Caco-2 (cell line): ENCODE measurements at regions of chr1 and their contacts with region 1.

Region 1: DNA sequence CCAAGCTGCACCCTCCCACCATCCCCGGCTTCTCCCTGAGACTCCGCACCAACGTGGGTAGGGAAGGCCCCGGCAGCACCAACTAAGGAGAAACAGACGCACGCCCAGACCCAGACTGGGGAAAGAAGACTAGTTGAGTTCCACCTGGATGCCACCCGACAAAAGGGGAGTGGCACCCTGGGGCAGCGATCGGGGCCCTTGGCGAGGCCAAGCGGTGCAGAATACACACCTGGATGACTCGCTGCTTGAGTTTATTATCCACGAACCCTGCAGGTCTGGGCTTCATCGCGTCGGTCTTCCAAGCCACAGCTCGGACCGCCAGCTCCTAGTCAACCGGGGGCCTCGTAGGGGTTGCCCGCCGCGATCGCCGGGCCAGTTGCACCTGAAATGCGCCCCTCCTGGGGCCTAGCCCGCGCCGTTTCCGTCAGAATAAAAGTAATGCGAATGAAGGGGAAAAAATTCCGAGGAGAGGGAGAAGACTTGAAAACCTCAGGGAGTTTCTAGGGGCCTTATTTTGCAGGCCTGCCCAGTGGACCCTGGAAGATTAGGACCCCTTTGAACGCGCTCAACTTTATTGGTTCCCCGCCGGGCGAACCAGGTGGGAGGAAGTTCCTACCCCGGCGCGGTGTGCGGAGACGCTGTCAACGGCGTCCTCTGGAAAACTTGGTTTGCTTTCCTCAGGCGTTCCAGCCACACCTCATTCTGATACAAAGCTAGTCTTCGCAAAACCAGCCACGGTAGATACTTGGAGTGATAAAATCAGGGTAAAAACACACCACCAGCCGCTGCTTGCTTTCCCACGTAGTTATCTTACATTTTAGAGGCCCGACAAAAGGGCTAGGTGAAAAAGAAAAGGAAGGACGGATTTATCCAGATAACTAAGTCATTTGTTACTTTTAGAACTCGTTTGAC is at the start of gene NVL:
- DNase-seq: peak; percentile 88 to 92
- H3K4me3 ChIP-seq: peak within 1 kb of the TSS; percentile 76
- H3K4me3 Mint-ChIP-seq: peak within 1 kb of the TSS; percentile 92
- H3K27ac Mint-ChIP-seq: peak within 1 kb of the TSS; percentile 99
- H3K4me1 ChIP-seq: no peaks in the 10 kb centered on the region; the same call in 1 of the 2 replicates
- H3K4me1 Mint-ChIP-seq: peaks cover 20% of the 10 kb centered on the region
- H3K27me3 ChIP-seq: no peaks in the 10 kb centered on the region
- H3K27me3 Mint-ChIP-seq: no peaks in the 10 kb centered on the region
- CTCF ChIP-seq: no peak
- total RNA-seq, gene NVL: 45.0 and 52.3 TPM in 2 replicates

Region 2: GRCh38 chr1:224116131-224116530 is 214.0 kb before region 1 on chr1:
- CTCF ChIA-PET with region 1: no interaction called
- POLR2A ChIA-PET with region 1: no interaction called
- intact Hi-C with region 1: loop called (anchors 1 kb)
- DNase-seq: peak in 1 of 2 experiments; percentile 9
- H3K4me3 ChIP-seq: no peak overlapping the region; the same call in 1 of the 2 replicates
- H3K4me3 Mint-ChIP-seq: no peak overlapping the region
- H3K27ac Mint-ChIP-seq: no peak overlapping the region
- H3K4me1 ChIP-seq: peaks cover 8% of the 10 kb centered on the region; the same call in 1 of the 2 replicates
- H3K4me1 Mint-ChIP-seq: no peaks in the 10 kb centered on the region
- H3K27me3 ChIP-seq: no peaks in the 10 kb centered on the region
- H3K27me3 Mint-ChIP-seq: no peaks in the 10 kb centered on the region
- CTCF ChIP-seq: peak; percentile 40 to 55

Region 3: GRCh38 chr1:224170365-224171112 is 159.6 kb before region 1 on chr1:
- CTCF ChIA-PET with region 1: no interaction called
- POLR2A ChIA-PET with region 1: no interaction called
- intact Hi-C with region 1: loop called (anchors 1 kb)
- DNase-seq: peak in 1 of 2 experiments; percentile 42
- H3K4me3 ChIP-seq: no peak overlapping the region
- H3K4me3 Mint-ChIP-seq: no peak overlapping the region
- H3K27ac Mint-ChIP-seq: no peak overlapping the region
- H3K4me1 ChIP-seq: no peaks in the 10 kb centered on the region
- H3K4me1 Mint-ChIP-seq: peaks cover 14% of the 10 kb centered on the region
- H3K27me3 ChIP-seq: no peaks in the 10 kb centered on the region
- H3K27me3 Mint-ChIP-seq: no peaks in the 10 kb centered on the region
- CTCF ChIP-seq: peak; percentile 33 to 55

Region 4: DNA sequence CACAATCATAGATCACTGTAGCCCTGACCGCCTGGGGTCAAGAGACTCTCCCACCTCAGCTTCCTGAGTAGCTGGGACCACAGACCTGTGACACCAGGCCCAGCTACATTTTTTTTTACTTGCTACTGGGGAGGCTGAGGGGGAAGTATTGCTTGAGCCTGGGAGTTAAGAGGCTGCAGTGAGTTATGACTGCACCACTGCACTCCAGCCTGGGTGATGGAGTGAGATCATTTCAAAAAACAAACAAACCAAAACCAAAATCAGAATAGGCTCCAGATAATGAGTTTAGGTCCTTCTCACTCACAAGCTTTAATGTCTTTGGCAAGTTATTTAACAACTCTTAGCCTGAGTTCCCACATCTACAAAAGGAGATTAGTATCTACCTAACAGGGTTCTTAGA is 81.7 kb after region 1 on chr1:
- CTCF ChIA-PET with region 1: no interaction called
- POLR2A ChIA-PET with region 1: interaction called, 12 read pairs
- intact Hi-C with region 1: no loop called
- DNase-seq: no peak
- H3K4me3 ChIP-seq: no peak overlapping the region
- H3K4me3 Mint-ChIP-seq: no peak overlapping the region
- H3K27ac Mint-ChIP-seq: no peak overlapping the region
- H3K4me1 ChIP-seq: peaks cover 8% of the 10 kb centered on the region
- H3K4me1 Mint-ChIP-seq: peaks cover 8% of the 10 kb centered on the region
- H3K27me3 ChIP-seq: no peaks in the 10 kb centered on the region
- H3K27me3 Mint-ChIP-seq: no peaks in the 10 kb centered on the region
- CTCF ChIP-seq: no peak